Head of caudate nucleus (tissue), 42 donors: ENCODE measurements at regions of chr6 and their contacts with region 1.

Region 1: GRCh38 chr6:108113557-108114519 is 39.3 kb upstream of the OSTM1 start:
- DNase-seq: peak in 23 of 42 donors; percentile 19 to 78 (median 48)

Region 2: GRCh38 chr6:108168501-108169463 is 54.9 kb after region 1 on chr6:
- intact Hi-C with region 1: loop called (anchors 5 kb)
- DNase-seq: peak in 20 of 42 donors; percentile 22 to 71 (median 47)

Region 3: DNA sequence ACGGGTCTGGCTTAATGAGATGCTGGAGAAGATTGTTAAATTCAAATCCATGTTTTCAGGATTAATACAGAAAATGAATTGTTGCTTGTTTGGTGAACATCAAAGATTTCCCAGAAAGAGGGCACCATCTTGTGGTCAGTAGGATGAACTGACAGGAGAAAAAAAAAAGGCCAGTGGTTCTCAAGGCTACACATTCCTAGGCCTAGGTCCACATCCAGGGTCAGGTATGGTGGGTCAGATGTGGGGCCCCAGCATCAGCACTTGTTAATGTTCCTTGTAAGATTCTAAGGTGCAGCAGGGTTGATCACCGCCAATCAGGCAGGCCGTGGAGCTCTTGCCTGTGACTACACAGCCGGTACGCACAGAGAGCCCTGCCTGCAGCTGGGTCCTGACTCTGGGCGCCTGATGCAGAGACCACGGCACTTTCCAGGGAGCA is 412.9 kb after region 1 on chr6:
- intact Hi-C with region 1: loop called (anchors 5 kb)
- DNase-seq: peak in 4 of 42 donors; percentile 8 to 48 (median 28)